ENCODE measurements at regions of chr2 and their contacts with region 1.

Region 1: DNA sequence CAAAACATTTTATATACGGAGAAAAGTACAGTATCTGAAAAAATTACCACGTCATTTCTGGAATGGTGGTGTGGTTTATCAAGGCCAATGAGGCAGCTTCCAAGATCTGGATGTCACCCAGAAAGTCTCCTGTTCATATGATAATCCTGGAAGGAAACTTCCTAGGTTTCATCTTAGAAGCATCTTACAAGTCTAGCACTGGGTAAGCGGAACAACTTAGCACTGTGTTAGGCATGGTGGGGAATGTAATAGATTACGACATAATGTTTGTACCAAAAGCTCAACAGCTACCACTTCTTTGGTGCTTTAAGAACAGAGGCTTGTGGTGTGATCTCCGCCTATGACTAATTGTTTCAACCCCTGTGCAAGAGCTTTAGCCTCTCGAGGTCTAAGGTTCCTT is 63.1 kb upstream of the LYPD1 start:
- DNase-seq: no peak
- ATAC-seq: no peak
- H3K4me3 ChIP-seq: no peak overlapping the region
- H3K27ac ChIP-seq: no peak overlapping the region
- H3K4me1 ChIP-seq: no peaks in the 10 kb centered on the region
- H3K27me3 ChIP-seq: no peaks in the 10 kb centered on the region
- CTCF ChIP-seq: no peak
- EP300 ChIP-seq: no peak
- POLR2A ChIP-seq: no peak
- RAD21 ChIP-seq: no peak

Region 2: DNA sequence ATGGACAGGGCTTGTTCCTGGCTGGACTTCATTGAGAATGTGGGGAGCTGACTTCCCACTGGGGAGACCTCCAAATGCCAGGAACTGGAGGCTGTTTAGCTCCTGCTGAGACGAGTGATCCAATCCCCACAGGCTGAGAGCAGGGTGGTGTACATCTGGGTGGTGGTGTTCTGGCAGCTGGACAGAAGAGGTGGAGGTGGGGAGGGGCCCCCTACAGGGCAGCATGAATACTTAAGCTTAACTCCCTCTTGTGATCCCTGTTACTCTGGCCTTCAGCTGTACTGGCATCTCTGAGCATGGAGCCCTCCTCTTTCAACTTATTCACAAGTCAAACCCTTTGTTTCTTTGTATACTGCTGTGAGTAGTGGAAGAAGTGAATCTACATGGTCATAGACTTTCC is 104.7 kb after region 1 on chr2:
- CTCF ChIA-PET with region 1: no interaction called
- POLR2A ChIA-PET with region 1: no interaction called
- in situ Hi-C with region 1: no loop called
- intact Hi-C with region 1: no loop called
- DNase-seq: no peak
- ATAC-seq: peak; percentile 60; the same call in 2 of the 3 replicates
- H3K4me3 ChIP-seq: no peak overlapping the region
- H3K27ac ChIP-seq: no peak overlapping the region
- H3K4me1 ChIP-seq: no peaks in the 10 kb centered on the region
- H3K27me3 ChIP-seq: no peaks in the 10 kb centered on the region
- CTCF ChIP-seq: no peak
- EP300 ChIP-seq: no peak
- POLR2A ChIP-seq: no peak
- RAD21 ChIP-seq: no peak

Region 3: DNA sequence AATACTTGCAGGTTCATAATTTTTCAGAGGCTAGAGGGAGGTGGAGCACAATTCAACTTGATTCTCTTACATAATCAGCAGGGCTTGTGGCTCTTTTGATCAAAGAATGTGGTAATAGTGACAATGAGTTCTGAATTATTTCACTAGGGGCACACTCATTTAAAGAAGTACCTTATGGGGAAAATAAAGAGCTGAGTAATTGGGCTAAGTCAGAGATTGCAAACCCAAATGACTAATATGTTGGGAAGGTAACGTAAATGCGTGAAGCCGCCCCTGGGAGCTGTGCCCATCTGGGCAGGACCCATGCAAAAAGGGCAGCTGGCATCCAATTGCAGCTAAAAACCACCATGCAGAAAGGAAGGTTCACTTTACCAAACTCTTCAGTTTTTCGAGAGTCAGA is 799.8 kb after region 1 on chr2:
- CTCF ChIA-PET with region 1: no interaction called
- POLR2A ChIA-PET with region 1: no interaction called
- in situ Hi-C with region 1: no loop called
- intact Hi-C with region 1: loop called (anchors 5 kb)
- DNase-seq: no peak
- ATAC-seq: no peak
- H3K4me3 ChIP-seq: no peak overlapping the region
- H3K27ac ChIP-seq: no peak overlapping the region
- H3K4me1 ChIP-seq: no peaks in the 10 kb centered on the region
- H3K27me3 ChIP-seq: no peaks in the 10 kb centered on the region
- CTCF ChIP-seq: no peak
- EP300 ChIP-seq: no peak
- POLR2A ChIP-seq: no peak
- RAD21 ChIP-seq: no peak